ENCODE measurements at regions of chr11 and their contacts with region 1.

Region 1: GRCh38 chr11:95790123-95790932 is at the start of gene CEP57:
- DNase-seq: peak; percentile 87 to 99 (median 90)
- ATAC-seq: peak; percentile 80
- H3K4me3 ChIP-seq: peak within 1 kb of the TSS; percentile 88
- H3K27ac ChIP-seq: peak within 1 kb of the TSS; percentile 99
- H3K4me1 ChIP-seq: peaks cover 4 to 14% of the 10 kb centered on the region in 2 experiments; a peak in 4 of 5 replicates
- H3K27me3 ChIP-seq: no peaks in the 10 kb centered on the region
- CTCF ChIP-seq: no peak
- EP300 ChIP-seq: no peak
- POLR2A ChIP-seq: peak; percentile 92
- RAD21 ChIP-seq: no peak
- polyA plus RNA-seq, gene CEP57: 25.1 to 33.9 TPM

Region 2: GRCh38 chr11:95778699-95779098 is 11.6 kb before region 1 on chr11:
- CTCF ChIA-PET with region 1: no interaction called
- POLR2A ChIA-PET with region 1: interaction called, 20 read pairs
- in situ Hi-C with region 1: no loop called
- intact Hi-C with region 1: no loop called
- DNase-seq: no peak
- ATAC-seq: no peak
- H3K4me3 ChIP-seq: no peak overlapping the region
- H3K27ac ChIP-seq: no peak overlapping the region
- H3K4me1 ChIP-seq: no peaks in the 10 kb centered on the region
- H3K27me3 ChIP-seq: no peaks in the 10 kb centered on the region
- CTCF ChIP-seq: no peak
- EP300 ChIP-seq: no peak
- POLR2A ChIP-seq: no peak
- RAD21 ChIP-seq: no peak

Region 3: DNA sequence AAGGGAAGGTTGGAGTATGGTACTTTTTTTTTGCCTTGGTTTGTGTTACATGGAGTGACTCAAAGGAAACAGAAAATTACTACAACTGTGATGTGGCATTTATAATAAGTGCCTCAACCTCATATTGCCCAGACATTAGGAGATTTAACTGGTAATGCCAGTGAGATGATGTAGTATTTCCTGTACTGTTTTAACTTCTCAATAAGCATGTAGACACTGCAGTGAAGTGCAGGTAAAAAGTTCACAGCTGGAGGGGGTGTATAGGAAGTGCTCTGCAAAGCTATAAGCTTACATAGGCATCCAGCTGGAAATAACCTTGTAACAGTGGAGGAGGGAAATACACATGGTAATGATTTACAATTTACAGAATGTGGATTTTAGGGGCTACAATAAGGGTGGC is 271.8 kb after region 1 on chr11:
- CTCF ChIA-PET with region 1: no interaction called
- POLR2A ChIA-PET with region 1: no interaction called
- in situ Hi-C with region 1: no loop called
- intact Hi-C with region 1: no loop called
- DNase-seq: no peak
- ATAC-seq: no peak
- H3K4me3 ChIP-seq: no peak overlapping the region
- H3K27ac ChIP-seq: no peak overlapping the region
- H3K4me1 ChIP-seq: no peaks in the 10 kb centered on the region
- H3K27me3 ChIP-seq: no peaks in the 10 kb centered on the region
- CTCF ChIP-seq: no peak
- EP300 ChIP-seq: no peak
- POLR2A ChIP-seq: no peak
- RAD21 ChIP-seq: no peak